BJ (cell line): ENCODE measurements at regions of chr3 and their contacts with region 1.

Region 1: DNA sequence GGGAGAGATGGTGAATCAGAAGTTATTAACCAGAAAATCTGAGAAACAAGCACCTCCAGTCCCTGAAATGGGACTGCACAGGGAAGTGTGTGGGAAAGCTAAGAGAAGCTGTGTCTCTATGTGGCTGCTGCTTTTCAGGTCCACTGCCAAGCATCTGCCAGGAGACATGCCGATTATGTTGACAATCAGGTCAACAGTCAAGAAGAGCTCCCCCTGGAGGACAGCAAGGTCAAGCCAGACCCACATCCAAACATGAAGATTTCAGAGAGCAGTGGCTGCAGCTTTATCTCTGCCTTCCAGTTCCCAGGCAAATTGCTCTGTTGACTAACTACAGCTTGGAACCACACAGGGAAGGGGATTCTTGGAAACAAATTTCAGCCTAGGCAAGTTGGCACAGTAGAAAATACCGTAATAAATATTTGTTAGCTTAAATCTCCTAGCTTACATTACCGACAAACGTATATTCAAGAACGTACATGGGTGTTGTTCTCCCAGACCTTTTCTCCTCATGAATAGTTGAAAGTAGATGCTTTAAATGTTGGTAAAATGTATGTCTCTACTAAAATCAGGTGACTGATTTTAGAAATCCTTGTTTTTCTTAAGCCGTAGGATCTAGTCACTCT is 394.5 kb upstream of the RARB start:
- DNase-seq: no peak
- H3K4me3 ChIP-seq: no peak overlapping the region
- H3K27me3 ChIP-seq: no peaks in the 10 kb centered on the region
- CTCF ChIP-seq: peak; percentile 38

Region 2: DNA sequence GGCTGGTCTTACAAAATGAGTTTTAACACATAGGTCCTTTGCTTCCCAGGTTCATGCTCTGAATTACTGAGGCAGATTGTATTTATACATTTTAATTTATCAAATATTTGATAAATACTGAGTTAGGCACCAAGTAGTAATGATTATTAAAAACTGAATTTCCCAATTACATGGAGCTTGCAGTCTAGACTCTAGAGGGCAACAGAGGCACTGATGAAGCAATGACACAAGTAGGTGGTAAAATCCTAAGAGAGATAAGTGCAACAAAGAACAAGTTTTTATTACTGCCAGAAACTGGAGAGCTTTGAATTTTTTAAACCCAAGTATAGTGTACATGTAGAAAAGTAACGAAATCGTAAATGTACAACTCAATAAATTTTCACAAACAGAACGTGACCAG is 11.7 kb before region 1 on chr3:
- CTCF ChIA-PET with region 1: interaction called, 69 read pairs
- POLR2A ChIA-PET with region 1: interaction called, 3 read pairs
- DNase-seq: no peak
- H3K4me3 ChIP-seq: no peak overlapping the region
- H3K27me3 ChIP-seq: no peaks in the 10 kb centered on the region
- CTCF ChIP-seq: peak; percentile 74

Region 3: GRCh38 chr3:25044762-25045710 is 11.5 kb after region 1 on chr3:
- CTCF ChIA-PET with region 1: interaction called, 11 read pairs
- POLR2A ChIA-PET with region 1: interaction called, 7 read pairs
- DNase-seq: no peak
- H3K4me3 ChIP-seq: no peak overlapping the region
- H3K27me3 ChIP-seq: no peaks in the 10 kb centered on the region
- CTCF ChIP-seq: no peak

Region 4: DNA sequence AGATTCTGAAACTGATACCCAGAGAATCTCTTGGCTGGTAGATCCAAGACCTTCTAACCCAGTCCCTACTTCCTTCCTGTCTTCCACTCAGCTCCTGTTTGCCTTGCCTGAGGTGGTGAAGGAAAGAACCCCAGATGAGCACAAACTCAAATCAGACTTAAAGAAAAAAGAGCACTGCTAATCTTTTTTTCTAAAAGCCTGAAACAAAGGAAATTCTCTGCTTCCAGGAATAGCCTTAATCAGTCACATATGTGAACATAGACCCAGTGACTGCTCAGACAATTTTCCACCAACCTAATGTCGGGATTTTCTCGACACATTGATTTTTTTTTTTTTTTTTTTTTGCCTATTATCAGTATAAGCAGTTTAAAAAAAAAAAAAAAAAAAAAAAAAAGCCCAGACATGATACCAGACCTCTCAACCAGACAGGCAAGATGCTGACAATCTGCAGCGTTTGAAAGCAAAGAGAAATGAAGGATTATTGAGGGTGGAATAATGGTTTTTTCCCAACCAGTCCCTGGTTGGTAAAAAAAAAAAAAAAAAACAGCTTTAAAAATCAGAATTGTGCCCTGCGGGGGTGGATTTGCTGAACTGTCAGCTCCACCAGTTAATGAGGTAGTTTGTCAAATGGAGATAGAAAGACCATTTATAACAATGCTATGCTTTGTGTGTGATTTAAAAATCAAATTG is 137.7 kb after region 1 on chr3:
- CTCF ChIA-PET with region 1: no interaction called
- POLR2A ChIA-PET with region 1: no interaction called
- DNase-seq: no peak
- H3K4me3 ChIP-seq: no peak overlapping the region
- H3K27me3 ChIP-seq: no peaks in the 10 kb centered on the region
- CTCF ChIP-seq: no peak

Region 5: DNA sequence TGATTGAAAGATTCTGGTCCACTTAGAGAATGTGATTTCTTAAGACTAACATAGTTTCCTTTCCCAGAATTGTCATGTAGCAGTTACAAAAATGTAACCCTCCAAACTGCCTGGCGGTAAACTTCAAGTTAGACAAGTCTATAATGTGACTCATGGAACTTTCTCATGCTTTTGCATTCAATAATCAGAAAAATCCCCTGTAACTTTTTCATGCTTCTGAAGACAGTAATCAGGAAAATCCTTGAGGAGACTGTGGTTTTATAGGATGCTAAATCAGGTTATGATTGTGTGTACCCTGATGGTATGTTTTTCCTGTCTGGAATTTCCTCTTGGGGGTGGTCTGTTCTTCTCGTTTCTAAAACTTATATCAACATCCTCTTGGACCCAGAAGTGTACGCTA is 320.6 kb after region 1 on chr3:
- CTCF ChIA-PET with region 1: no interaction called
- POLR2A ChIA-PET with region 1: no interaction called
- DNase-seq: peak; percentile 20
- H3K4me3 ChIP-seq: no peak overlapping the region
- H3K27me3 ChIP-seq: no peaks in the 10 kb centered on the region
- CTCF ChIP-seq: no peak

Region 6: GRCh38 chr3:25468866-25469319 is 435.4 kb after region 1 on chr3:
- CTCF ChIA-PET with region 1: interaction called, 3 read pairs
- POLR2A ChIA-PET with region 1: interaction called, 12 read pairs
- DNase-seq: peak; percentile 96
- H3K4me3 ChIP-seq: no peak overlapping the region
- H3K27me3 ChIP-seq: no peaks in the 10 kb centered on the region
- CTCF ChIP-seq: peak; percentile 58